Heart left ventricle (tissue), 16 donors: ENCODE measurements at regions of chr4 and their contacts with region 1.

Region 1: GRCh38 chr4:2761035-2761923 is 5.1 kb upstream of the TNIP2 start:
- DNase-seq: no peak
- ATAC-seq: peak in 1 of 4 donors; percentile 23
- H3K4me3 ChIP-seq: no peak overlapping the region
- H3K27ac ChIP-seq: no peak overlapping the region
- H3K4me1 ChIP-seq: peaks cover 0 to 20% (median 7%) of the 10 kb centered on the region in 12 donors
- H3K27me3 ChIP-seq: no peaks in the 10 kb centered on the region
- CTCF ChIP-seq: peak in 4 of 12 donors; percentile 7 to 28 (median 10)
- POLR2A ChIP-seq: no peak

Region 2: DNA sequence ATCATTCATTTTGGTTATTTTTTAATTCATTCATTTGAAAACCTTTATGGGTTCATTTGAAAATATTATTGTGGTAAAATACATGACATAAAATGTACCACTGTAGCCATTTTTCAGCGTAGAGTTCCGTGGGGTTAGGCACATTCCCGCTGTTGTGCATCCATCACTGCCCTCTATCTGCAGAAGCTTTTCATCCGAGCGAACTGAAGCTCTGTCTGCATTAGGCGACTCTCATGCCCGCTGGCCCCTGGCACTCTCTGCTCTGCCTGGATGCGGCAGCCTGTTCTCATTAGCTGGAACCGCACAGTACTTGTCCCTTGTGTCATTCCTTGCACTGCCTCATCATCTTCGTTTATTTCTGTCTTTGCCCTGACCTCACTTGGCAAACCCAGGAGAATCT is 325.0 kb before region 1 on chr4:
- intact Hi-C with region 1: no loop called
- DNase-seq: no peak
- ATAC-seq: no peak
- H3K4me3 ChIP-seq: no peak overlapping the region
- H3K27ac ChIP-seq: no peak overlapping the region
- H3K4me1 ChIP-seq: peaks cover 0 to under 1% (median 0%) of the 10 kb centered on the region in 12 donors
- H3K27me3 ChIP-seq: no peaks in the 10 kb centered on the region
- CTCF ChIP-seq: peak in 4 of 12 donors; percentile 15 to 30 (median 20)
- POLR2A ChIP-seq: no peak

Region 3: GRCh38 chr4:2458546-2459491 is 302.5 kb before region 1 on chr4:
- intact Hi-C with region 1: no loop called
- DNase-seq: no peak
- ATAC-seq: no peak
- H3K4me3 ChIP-seq: no peak overlapping the region
- H3K27ac ChIP-seq: no peak overlapping the region
- H3K4me1 ChIP-seq: peaks cover 0 to 15% (median 8%) of the 10 kb centered on the region in 12 donors
- H3K27me3 ChIP-seq: peaks cover 0 to 12% (median 0%) of the 10 kb centered on the region in 9 donors
- CTCF ChIP-seq: no peak
- POLR2A ChIP-seq: no peak

Region 4: DNA sequence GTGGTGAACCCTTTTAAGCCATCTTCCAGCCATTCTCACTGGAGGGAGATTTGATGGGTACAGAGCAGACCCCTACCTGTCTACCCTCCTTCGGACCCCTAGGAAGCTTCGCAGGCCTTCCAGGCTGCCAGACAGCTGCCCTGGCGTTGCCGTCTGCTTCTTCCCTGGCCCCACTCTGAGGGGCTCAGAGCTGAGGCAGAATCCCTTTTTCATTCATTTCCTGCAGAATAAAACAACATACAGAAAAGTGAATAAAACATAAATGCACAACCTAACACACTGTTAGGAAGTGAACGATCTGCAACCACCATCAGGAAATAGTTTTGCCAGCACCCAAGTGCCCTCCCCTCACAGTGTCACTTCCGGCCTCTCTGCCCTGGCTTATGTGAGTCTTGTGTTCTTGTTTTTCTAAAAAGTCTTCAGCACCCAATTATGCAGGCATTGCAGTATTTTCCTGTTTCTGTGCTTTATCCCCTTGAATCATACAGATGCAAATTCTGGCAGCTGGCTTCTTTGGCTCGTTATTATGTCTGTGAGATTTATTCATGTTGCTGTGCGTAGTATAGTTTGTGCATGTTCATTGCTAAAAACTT is 76.7 kb after region 1 on chr4:
- intact Hi-C with region 1: loop called in 7 of 10 experiments (anchors 2 to 10 kb)
- DNase-seq: peak in 2 of 5 donors; percentile 56 to 67
- ATAC-seq: peak; percentile 24 to 68 (median 57)
- H3K4me3 ChIP-seq: peak overlapping the region in 6 of 12 donors; percentile 13 to 40 (median 30)
- H3K27ac ChIP-seq: peak overlapping the region in 9 of 12 donors; percentile 22 to 81 (median 53)
- H3K4me1 ChIP-seq: peaks cover 0 to 70% (median 21%) of the 10 kb centered on the region in 12 donors
- H3K27me3 ChIP-seq: no peaks in the 10 kb centered on the region
- CTCF ChIP-seq: no peak
- POLR2A ChIP-seq: no peak

Region 5: DNA sequence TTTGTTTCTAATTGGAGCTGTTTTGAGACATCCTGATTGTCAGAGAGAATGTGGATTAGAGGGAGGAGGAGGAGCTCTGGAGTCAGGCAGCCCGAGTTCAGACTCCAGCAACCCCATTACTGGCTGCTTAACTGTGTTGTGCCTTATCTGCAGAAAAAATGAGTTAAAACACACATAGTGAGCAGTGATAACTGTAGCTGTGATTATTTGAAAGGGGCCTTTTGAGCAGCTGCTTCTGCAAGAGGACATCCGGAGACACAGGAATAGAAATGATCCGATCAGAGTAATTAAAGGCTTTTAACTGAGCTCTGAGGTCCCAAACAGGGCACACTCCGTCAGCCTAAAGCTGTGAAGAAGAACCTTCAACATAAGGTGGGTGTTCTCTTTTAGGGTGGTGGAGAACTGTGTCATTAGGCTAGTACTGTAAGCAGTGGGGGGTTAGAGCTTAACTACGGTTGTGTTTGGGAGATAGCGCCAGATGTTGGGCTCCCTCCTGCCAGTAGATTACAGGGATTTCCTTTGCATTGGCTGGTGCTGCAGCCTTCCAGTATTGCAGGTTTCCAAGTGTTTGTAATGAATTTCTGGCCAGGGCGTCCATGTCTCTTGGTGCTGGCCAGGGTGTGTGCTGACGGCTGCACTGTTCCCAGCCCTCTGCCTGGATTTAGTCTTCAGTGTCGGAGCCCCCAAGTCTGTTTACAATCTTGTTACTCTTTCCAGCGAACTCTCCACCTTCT is 106.6 kb after region 1 on chr4:
- intact Hi-C with region 1: loop called in 1 of 10 experiments (anchors 10 kb)
- DNase-seq: peak in 2 of 5 donors; percentile 25 to 53
- ATAC-seq: peak; percentile 66 to 81 (median 68)
- H3K4me3 ChIP-seq: peak overlapping the region in 10 of 12 donors; percentile 15 to 50 (median 38)
- H3K27ac ChIP-seq: peak overlapping the region; percentile 42 to 83 (median 70)
- H3K4me1 ChIP-seq: peaks cover 41 to 100% (median 97%) of the 10 kb centered on the region in 12 donors
- H3K27me3 ChIP-seq: no peaks in the 10 kb centered on the region
- CTCF ChIP-seq: no peak
- POLR2A ChIP-seq: no peak

Region 6: GRCh38 chr4:2907706-2908306 is 146.5 kb after region 1 on chr4:
- intact Hi-C with region 1: loop called in 1 of 10 experiments (anchors 10 kb)
- DNase-seq: peak in 1 of 5 donors; percentile 15
- ATAC-seq: no peak
- H3K4me3 ChIP-seq: no peak overlapping the region
- H3K27ac ChIP-seq: no peak overlapping the region
- H3K4me1 ChIP-seq: peaks cover 0 to 28% (median 0%) of the 10 kb centered on the region in 12 donors
- H3K27me3 ChIP-seq: no peaks in the 10 kb centered on the region
- CTCF ChIP-seq: no peak
- POLR2A ChIP-seq: no peak

Region 7: GRCh38 chr4:2954358-2955185 is 193.3 kb after region 1 on chr4:
- intact Hi-C with region 1: loop called in 1 of 10 experiments (anchors 5 kb)
- DNase-seq: no peak
- ATAC-seq: peak in 2 of 4 donors; percentile 33 to 43
- H3K4me3 ChIP-seq: no peak overlapping the region
- H3K27ac ChIP-seq: peak overlapping the region in 1 of 12 donors; percentile 48
- H3K4me1 ChIP-seq: peaks cover 0 to 14% (median 0%) of the 10 kb centered on the region in 12 donors
- H3K27me3 ChIP-seq: no peaks in the 10 kb centered on the region
- CTCF ChIP-seq: peak in 3 of 12 donors; percentile 9 to 16 (median 12)
- POLR2A ChIP-seq: no peak

Region 8: GRCh38 chr4:2995546-2996265 is 234.4 kb after region 1 on chr4:
- intact Hi-C with region 1: no loop called
- DNase-seq: no peak
- ATAC-seq: no peak
- H3K4me3 ChIP-seq: no peak overlapping the region
- H3K27ac ChIP-seq: no peak overlapping the region
- H3K4me1 ChIP-seq: no peaks in the 10 kb centered on the region
- H3K27me3 ChIP-seq: no peaks in the 10 kb centered on the region
- CTCF ChIP-seq: no peak
- POLR2A ChIP-seq: no peak